GM12878 (cell line): ENCODE measurements at regions of chr9 and their contacts with region 1.

Region 1: GRCh38 chr9:29211580-29212396 is 1638.5 kb upstream of the C9orf72 start:
- DNase-seq: no peak
- ATAC-seq: peak; percentile 95
- H3K4me3 ChIP-seq: no peak overlapping the region
- H3K27ac ChIP-seq: no peak overlapping the region
- H3K4me1 ChIP-seq: no peaks in the 10 kb centered on the region
- H3K27me3 ChIP-seq: peaks cover 3 to 7% of the 10 kb centered on the region in 2 experiments
- CTCF ChIP-seq: peak; percentile 54 to 75 (median 55)
- EP300 ChIP-seq: no peak
- POLR2A ChIP-seq: no peak
- RAD21 ChIP-seq: peak; percentile 50

Region 2: DNA sequence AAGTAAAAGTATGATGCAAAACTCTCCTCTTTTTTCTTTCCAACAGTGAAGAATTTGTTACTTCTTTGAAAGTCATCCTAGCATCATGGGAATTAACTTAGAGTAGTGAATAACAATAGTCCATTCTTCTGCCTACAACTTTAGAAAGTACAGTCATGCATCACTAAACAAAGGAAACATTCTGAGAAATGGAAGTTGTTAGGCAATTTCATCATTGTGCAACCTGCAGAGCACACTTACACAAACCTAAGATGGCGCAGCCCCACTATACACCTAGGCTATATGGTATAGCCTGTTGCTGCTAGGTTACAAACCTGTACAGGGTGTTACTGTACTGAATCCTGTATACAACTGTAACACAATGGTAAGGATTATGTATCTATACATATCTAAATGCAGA is 429.2 kb before region 1 on chr9:
- CTCF ChIA-PET with region 1: no interaction called
- POLR2A ChIA-PET with region 1: no interaction called
- RAD21 ChIA-PET with region 1: no interaction called
- SMC1A ChIA-PET with region 1: no interaction called
- in situ Hi-C with region 1: no loop called
- intact Hi-C with region 1: loop called (anchors 10 kb)
- DNase-seq: no peak
- ATAC-seq: peak; percentile 54
- H3K4me3 ChIP-seq: no peak overlapping the region
- H3K27ac ChIP-seq: no peak overlapping the region
- H3K4me1 ChIP-seq: no peaks in the 10 kb centered on the region
- H3K27me3 ChIP-seq: no peaks in the 10 kb centered on the region
- CTCF ChIP-seq: no peak
- EP300 ChIP-seq: no peak
- POLR2A ChIP-seq: no peak
- RAD21 ChIP-seq: no peak

Region 3: GRCh38 chr9:29150606-29151005 is 61.2 kb before region 1 on chr9:
- CTCF ChIA-PET with region 1: no interaction called
- POLR2A ChIA-PET with region 1: no interaction called
- RAD21 ChIA-PET with region 1: no interaction called
- SMC1A ChIA-PET with region 1: no interaction called
- in situ Hi-C with region 1: no loop called
- intact Hi-C with region 1: loop called (anchors 10 kb)
- DNase-seq: no peak
- ATAC-seq: no peak
- H3K4me3 ChIP-seq: no peak overlapping the region
- H3K27ac ChIP-seq: no peak overlapping the region
- H3K4me1 ChIP-seq: no peaks in the 10 kb centered on the region
- H3K27me3 ChIP-seq: no peaks in the 10 kb centered on the region
- CTCF ChIP-seq: no peak
- EP300 ChIP-seq: no peak
- POLR2A ChIP-seq: no peak
- RAD21 ChIP-seq: no peak